Activated T-helper 2 cell treated with anti-CD3 and anti-CD28 coated beads, Interferon-gamma antibody, Interleukin-2, Interleukin-4, amounts not matched to agents 10 μg/mL and 5 μg/mL and 100 μg/mL, durations not matched to agents 14 hours and 24 hours and 36 hours (primary cell): ENCODE measurements at regions of chr5 and their contacts with region 1.

Region 1: DNA sequence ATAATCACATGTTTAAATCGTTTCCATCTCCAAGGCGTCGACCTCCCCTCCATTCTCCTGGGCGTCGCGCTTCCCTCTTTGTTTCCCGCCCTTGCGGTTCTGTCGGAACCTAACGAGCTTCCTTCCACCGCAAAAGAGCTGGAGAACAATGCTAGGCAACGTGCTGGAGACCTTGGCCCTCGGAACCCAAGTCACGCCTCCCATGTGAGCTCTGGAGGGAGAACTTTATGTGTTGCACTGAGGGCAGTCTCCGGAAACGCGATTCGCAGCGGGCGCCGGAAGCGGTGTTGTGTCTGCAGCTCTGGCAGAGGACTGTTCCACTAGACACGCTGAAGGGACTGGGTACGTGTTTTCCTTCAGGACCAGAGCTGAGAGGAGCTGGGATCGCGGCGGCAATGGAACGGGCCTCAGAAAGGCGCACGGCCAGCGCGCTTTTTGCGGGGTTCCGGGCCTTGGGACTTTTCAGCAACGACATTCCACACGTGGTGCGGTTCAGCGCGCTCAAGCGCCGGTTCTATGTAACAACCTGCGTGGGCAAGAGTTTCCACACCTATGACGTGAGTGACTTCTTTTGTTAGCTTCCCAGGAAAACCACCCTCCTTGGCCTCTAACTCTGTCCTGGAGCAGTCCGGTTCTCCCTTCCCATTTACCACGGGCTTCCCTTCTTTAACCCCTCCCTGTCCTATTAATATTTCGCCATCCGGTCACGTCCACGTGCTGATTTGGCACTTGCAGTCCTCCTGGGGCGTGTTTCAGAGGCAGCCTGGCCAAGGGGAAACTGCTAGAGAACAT is at the start of gene WDR36:
- DNase-seq: peak; percentile 86
- H3K4me3 Mint-ChIP-seq: peak within 1 kb of the TSS; percentile 95
- H3K27ac Mint-ChIP-seq: peak within 1 kb of the TSS; percentile 92
- H3K4me1 Mint-ChIP-seq: peaks cover 31% of the 10 kb centered on the region
- H3K27me3 Mint-ChIP-seq: peaks cover 4% of the 10 kb centered on the region
- total RNA-seq, gene WDR36: 77.9 and 79.9 TPM in 2 replicates

Region 2: DNA sequence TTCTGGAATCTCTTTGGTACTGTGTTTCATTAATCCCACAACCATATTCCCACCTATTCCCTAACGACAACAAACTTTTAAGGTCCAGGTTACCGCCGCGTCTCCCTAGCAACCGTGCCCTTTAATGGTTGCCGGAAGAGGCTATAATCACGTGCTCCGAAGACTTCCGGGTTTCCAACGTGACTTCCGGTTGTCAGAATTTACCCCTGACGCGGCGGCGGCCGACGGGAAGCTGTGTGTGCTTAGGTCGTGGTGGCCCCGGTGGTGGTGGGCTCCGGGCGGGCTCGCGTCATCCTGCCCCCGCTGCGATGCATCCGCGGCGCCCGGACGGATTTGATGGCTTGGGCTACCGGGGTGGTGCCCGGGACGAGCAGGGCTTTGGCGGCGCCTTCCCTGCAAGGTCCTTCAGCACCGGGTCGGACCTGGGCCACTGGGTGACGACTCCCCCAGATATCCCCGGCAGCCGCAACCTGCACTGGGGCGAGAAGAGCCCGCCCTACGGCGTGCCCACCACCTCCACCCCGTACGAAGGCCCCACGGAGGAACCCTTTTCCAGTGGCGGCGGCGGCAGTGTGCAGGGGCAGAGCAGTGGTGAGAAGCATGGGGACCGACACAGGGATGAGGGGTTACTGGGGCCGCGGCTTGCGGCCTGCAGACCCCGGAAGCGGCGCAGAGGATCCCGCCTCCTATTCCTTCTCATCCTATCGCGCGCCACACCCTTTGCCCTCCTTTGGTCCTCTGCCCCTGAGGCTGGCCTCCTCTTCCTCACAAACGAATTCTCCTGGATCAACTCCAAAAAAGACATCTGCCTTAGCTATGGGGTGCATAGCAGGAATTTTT is 353.2 kb before region 1 on chr5 and contains the start of gene SLC25A46:
- intact Hi-C with region 1: loop called (anchors 1 kb)
- DNase-seq: peak; percentile 86
- H3K4me3 Mint-ChIP-seq: peak within 1 kb of the TSS; percentile 97
- H3K27ac Mint-ChIP-seq: peak within 1 kb of the TSS; percentile 92
- H3K4me1 Mint-ChIP-seq: peaks cover 28% of the 10 kb centered on the region
- H3K27me3 Mint-ChIP-seq: peaks cover 11% of the 10 kb centered on the region
- total RNA-seq, gene SLC25A46: 44.0 and 44.8 TPM in 2 replicates

Region 3: DNA sequence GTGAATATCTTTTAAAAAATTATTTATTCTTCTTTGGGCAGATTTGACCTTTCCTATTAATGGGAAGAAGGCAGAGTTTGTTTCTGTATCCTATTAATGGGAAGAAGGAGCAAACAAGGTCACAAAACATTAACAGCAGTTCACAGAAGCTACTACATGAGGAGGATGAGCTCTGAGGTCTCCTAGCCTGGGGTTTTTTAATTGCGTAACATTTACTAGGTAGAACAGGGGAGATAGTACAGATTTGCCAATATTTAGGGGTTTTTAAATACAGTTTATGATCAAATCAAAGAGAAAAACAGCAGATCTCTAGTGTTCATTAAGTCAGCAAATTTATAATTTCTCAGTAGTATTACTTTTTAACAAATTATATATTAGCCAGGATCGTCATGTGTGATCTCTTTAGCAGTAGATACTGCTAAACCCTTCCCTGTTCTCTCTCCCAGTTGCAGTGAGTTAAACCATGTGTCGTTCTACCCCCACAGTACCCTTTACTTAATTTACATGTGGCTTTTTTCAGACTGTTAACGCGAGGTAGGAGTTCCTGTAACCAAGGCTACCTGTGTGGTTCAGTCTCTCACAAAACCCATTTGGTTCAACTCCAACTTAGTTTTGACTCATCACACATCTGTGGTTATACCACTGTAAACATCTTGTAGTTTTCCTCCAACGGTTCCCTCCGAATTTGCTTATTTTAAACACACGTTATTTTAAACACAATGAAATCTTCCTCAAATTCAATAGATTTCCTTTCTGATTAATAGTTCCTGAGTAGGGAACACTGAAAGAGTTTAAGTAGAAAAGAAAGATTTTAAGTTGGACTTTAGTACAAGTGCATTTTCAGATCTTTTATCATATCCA is 340.1 kb before region 1 on chr5:
- intact Hi-C with region 1: loop called (anchors 2 kb)
- DNase-seq: peak; percentile 37
- H3K4me3 Mint-ChIP-seq: peak overlapping the region; percentile 60
- H3K27ac Mint-ChIP-seq: peak overlapping the region; percentile 81
- H3K4me1 Mint-ChIP-seq: peaks cover 48% of the 10 kb centered on the region
- H3K27me3 Mint-ChIP-seq: no peaks in the 10 kb centered on the region

Region 4: GRCh38 chr5:111072949-111073682 is 19.1 kb before region 1 on chr5:
- intact Hi-C with region 1: loop called (anchors 2 kb)
- DNase-seq: peak; percentile 50
- H3K4me3 Mint-ChIP-seq: peak overlapping the region; percentile 86
- H3K27ac Mint-ChIP-seq: no peak overlapping the region
- H3K4me1 Mint-ChIP-seq: peaks cover 33% of the 10 kb centered on the region
- H3K27me3 Mint-ChIP-seq: peaks cover 67% of the 10 kb centered on the region

Region 5: DNA sequence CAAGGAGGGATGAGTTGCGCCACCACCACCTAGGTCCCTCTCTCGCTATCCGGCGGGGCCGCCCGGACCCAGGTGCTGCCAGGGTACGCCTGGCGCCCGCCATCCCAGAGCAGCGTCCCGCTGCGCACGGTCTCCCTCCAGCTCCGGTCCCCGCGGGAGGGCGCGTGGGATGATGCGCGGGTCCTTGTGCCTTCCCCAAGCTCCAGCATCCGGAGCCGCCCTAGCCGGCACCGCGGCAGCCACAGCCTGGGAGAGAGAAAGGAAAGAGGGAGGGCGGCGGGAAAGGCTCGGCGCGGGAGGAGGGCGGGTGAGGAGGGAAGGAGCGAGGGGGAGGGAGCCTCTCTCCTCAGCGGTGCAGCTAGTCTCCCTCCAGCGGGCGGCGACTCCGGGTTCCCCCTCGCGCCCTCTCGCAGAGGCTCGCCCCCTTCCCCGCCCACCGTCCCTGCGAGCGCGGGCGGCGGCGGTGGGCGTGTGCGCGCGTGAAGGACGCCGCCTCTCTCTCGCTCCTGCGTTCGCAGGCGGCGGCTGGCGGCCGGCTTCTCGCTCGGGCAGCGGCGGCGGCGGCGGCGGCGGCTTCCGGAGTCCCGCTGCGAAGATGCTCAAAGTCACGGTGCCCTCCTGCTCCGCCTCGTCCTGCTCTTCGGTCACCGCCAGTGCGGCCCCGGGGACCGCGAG is 131.8 kb after region 1 on chr5 and contains the start of gene CAMK4:
- intact Hi-C with region 1: loop called (anchors 5 kb)
- DNase-seq: peak; percentile 74
- H3K4me3 Mint-ChIP-seq: peak within 1 kb of the TSS; percentile 97
- H3K27ac Mint-ChIP-seq: peak within 1 kb of the TSS; percentile 97
- H3K4me1 Mint-ChIP-seq: peaks cover 47% of the 10 kb centered on the region
- H3K27me3 Mint-ChIP-seq: no peaks in the 10 kb centered on the region
- total RNA-seq, gene CAMK4: 71.8 and 76.7 TPM in 2 replicates

Region 6: DNA sequence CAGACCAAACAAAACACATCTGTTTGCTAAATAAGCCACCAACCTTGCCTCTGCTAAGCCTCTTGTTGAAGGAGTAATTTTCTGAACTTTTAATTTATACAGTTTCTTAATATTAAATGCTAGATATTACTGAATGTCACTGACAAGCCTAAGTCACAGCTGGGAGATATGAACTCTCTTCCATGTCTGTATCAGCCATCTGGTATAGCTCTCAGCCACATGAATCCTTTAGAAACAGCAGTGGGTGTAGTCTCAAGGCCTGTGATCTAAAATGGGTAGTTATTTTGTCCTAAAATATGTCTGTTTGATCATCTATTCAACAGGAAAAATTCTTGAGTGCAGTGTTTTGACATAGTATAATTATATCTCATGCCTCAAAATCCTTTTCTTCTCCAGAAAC is 229.1 kb after region 1 on chr5:
- intact Hi-C with region 1: no loop called
- DNase-seq: no peak
- H3K4me3 Mint-ChIP-seq: no peak overlapping the region
- H3K27ac Mint-ChIP-seq: no peak overlapping the region
- H3K4me1 Mint-ChIP-seq: peaks cover 41% of the 10 kb centered on the region
- H3K27me3 Mint-ChIP-seq: no peaks in the 10 kb centered on the region

Region 7: GRCh38 chr5:112160652-112161391 is 1068.6 kb after region 1 on chr5:
- intact Hi-C with region 1: loop called (anchors 5 kb)
- DNase-seq: peak; percentile 90
- H3K4me3 Mint-ChIP-seq: peak overlapping the region; percentile 90
- H3K27ac Mint-ChIP-seq: peak overlapping the region; percentile 80
- H3K4me1 Mint-ChIP-seq: peaks cover 34% of the 10 kb centered on the region
- H3K27me3 Mint-ChIP-seq: no peaks in the 10 kb centered on the region